Activated T-helper 1 cell treated with anti-CD3 and anti-CD28 coated beads, Interleukin-12 subunit alpha, Interleukin-12 subunit beta, Interleukin-2, Interleukin-4 antibody, amounts not matched to agents 30 ng/mL and 10 ng/mL and 1 ng/mL, durations not matched to agents 14 hours and 24 hours and 36 hours (primary cell): ENCODE measurements at regions of chr12 and their contacts with region 1.

Region 1: DNA sequence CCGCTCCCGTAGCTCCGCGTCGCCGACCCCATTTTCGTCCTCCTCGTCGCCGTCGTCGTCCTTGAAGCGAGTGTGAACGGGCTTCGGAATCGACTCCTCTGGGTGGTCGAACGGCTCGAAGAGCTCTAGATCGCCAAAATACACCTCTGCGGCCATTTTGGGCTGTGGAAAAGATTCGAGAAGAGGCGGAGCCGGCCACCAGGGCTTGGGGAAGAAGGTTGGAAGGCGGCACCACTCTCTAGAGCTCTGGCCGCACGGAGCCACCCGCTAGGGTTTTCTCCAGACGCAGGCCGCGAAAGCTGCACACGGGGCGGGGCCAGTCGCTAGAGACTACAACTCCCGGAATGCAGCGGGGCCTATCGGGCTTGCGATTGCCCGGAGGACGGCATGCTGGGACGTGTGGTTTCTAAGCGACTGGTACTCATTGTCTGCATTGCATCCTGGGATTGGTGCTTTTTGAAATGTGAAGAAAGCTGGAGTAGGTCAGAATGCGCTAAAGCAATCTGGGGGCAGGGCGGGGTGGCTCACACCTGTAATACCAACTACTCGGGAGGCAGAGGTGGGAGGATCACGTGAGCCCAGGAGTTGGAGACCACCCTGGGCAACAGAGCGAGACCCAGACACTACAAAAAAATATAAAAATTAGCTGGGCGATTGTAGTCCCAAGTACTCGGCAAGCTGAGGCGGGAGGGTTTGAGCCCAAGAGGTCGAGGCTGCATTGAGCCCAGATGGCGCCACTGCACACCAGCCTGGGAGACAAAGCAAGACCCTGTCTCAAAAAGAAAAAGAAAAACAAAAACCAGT is at the start of gene ZCCHC8:
- DNase-seq: peak; percentile 96
- H3K4me3 Mint-ChIP-seq: peak within 1 kb of the TSS; percentile 92
- H3K27ac Mint-ChIP-seq: peak within 1 kb of the TSS; percentile 92
- H3K4me1 Mint-ChIP-seq: peaks cover 31% of the 10 kb centered on the region
- H3K27me3 Mint-ChIP-seq: no peaks in the 10 kb centered on the region
- total RNA-seq, gene ZCCHC8: 42.5 and 48.4 TPM in 2 replicates

Region 2: GRCh38 chr12:121917979-121918678 is 582.8 kb before region 1 on chr12 and contains the start of gene CFAP251:
- intact Hi-C with region 1: loop called (anchors 2 kb)
- DNase-seq: peak; percentile 92
- H3K4me3 Mint-ChIP-seq: peak within 1 kb of the TSS; percentile 80
- H3K27ac Mint-ChIP-seq: peak within 1 kb of the TSS; percentile 71
- H3K4me1 Mint-ChIP-seq: peaks cover 15% of the 10 kb centered on the region
- H3K27me3 Mint-ChIP-seq: peaks cover 2% of the 10 kb centered on the region
- total RNA-seq, gene CFAP251: 0.65 and 0.76 TPM in 2 replicates

Region 3: DNA sequence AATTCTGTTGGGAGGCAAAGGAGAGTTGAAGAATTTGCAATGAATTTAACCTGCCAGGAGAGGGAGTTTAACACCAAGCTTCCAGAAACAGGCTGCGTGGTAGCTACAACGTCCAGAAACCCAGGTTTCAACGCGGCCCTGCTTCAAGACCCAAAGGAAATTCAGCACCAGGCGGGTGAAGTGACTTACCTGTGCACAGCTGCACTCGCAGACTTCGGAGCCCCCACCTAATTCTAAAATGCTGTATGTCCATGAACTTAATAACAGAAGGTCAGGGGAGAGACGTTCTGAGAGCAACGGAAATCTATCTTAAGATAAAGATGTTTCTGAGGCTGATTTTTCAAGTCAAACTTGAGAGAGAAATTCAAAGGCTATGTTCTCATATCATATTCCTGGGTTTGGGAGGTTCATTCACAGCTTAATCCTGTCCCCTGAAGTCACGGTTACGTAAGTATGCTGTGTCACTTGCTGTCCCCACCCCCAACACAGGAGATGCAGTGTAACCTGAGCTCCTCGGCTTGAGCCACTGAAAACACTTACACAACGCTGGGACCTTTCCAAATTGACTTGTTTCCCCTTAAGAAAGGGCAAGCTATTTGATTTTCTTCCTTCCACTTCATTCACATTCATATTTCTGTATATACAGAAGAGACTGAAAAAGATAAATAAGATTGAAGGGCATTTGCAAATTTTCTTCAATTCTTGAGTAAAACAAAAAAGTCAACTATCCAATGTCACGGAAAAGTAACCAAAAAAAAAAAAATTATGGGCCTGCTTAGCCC is 101.1 kb before region 1 on chr12:
- intact Hi-C with region 1: loop called (anchors 1 kb)
- DNase-seq: peak; percentile 38
- H3K4me3 Mint-ChIP-seq: peak overlapping the region; percentile 65
- H3K27ac Mint-ChIP-seq: peak overlapping the region; percentile 66
- H3K4me1 Mint-ChIP-seq: peaks cover 30% of the 10 kb centered on the region
- H3K27me3 Mint-ChIP-seq: no peaks in the 10 kb centered on the region

Region 4: GRCh38 chr12:122483969-122484368 is 16.9 kb before region 1 on chr12:
- intact Hi-C with region 1: loop called (anchors 2 kb)
- DNase-seq: no peak
- H3K4me3 Mint-ChIP-seq: no peak overlapping the region
- H3K27ac Mint-ChIP-seq: no peak overlapping the region
- H3K4me1 Mint-ChIP-seq: no peaks in the 10 kb centered on the region
- H3K27me3 Mint-ChIP-seq: no peaks in the 10 kb centered on the region

Region 5: GRCh38 chr12:122571821-122572220 is 70.9 kb after region 1 on chr12:
- intact Hi-C with region 1: no loop called
- DNase-seq: no peak
- H3K4me3 Mint-ChIP-seq: no peak overlapping the region
- H3K27ac Mint-ChIP-seq: no peak overlapping the region
- H3K4me1 Mint-ChIP-seq: peaks cover 9% of the 10 kb centered on the region
- H3K27me3 Mint-ChIP-seq: no peaks in the 10 kb centered on the region

Region 6: DNA sequence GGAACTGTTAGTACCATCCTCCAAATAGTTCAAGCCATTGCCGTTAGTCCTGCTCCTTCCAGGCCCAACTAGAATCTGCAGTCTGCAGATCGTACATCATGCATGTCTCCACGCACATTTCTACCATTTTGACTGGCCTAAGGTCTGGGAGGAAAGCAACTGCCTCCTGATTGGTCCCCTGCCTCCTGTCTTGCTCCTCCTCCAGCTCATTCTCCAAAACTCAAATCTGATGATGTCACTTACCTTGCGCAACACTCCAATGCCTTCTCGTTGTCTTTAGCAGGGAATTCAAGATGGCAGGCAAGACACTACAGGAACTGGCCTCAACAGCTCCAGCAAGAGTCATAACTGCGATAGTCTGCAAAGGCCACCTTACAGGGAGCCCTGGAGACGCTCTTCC is 239.5 kb after region 1 on chr12:
- intact Hi-C with region 1: no loop called
- DNase-seq: no peak
- H3K4me3 Mint-ChIP-seq: no peak overlapping the region
- H3K27ac Mint-ChIP-seq: no peak overlapping the region
- H3K4me1 Mint-ChIP-seq: peaks cover 13% of the 10 kb centered on the region
- H3K27me3 Mint-ChIP-seq: no peaks in the 10 kb centered on the region

Region 7: GRCh38 chr12:122752464-122753318 is 251.8 kb after region 1 on chr12 and contains the start of gene DENR:
- intact Hi-C with region 1: loop called (anchors 1 kb)
- DNase-seq: peak; percentile 100
- H3K4me3 Mint-ChIP-seq: peak within 1 kb of the TSS; percentile 91
- H3K27ac Mint-ChIP-seq: peak within 1 kb of the TSS; percentile 92
- H3K4me1 Mint-ChIP-seq: peaks cover 54% of the 10 kb centered on the region
- H3K27me3 Mint-ChIP-seq: no peaks in the 10 kb centered on the region
- total RNA-seq, gene DENR: 87.6 and 88.7 TPM in 2 replicates